Posterior cingulate gyrus (tissue), 11 donors: ENCODE measurements at regions of chr16 and their contacts with region 1.

Region 1: GRCh38 chr16:12573730-12574383 is 229.8 kb downstream of the CPPED1 start:
- DNase-seq: peak in 8 of 10 donors; percentile 34 to 94 (median 62)

Region 2: GRCh38 chr16:12500771-12501170 is 73.1 kb before region 1 on chr16:
- intact Hi-C with region 1: no loop called
- DNase-seq: peak in 3 of 10 donors; percentile 15 to 69 (median 38)

Region 3: DNA sequence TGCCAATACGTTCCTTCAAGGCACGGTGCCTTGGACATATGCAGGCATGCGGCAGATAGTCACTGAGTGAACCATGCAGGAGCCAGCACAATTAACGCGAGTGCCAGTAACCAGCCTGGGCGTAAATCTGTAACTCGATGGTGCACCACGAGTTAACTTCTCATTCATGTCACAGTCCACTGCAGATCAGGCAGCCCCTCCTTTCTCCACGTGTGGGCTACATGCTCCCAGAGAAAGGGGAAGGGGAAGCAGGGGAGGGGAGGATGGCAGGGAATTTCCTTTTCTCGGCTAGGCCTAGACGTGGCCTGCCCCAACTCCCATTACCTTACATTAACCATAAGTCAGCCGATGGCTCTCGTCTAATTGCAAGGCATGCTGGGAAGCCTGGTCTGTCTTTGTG is 58.1 kb before region 1 on chr16:
- intact Hi-C with region 1: loop called (anchors 5 kb)
- DNase-seq: peak in 3 of 10 donors; percentile 27 to 80 (median 47)

Region 4: DNA sequence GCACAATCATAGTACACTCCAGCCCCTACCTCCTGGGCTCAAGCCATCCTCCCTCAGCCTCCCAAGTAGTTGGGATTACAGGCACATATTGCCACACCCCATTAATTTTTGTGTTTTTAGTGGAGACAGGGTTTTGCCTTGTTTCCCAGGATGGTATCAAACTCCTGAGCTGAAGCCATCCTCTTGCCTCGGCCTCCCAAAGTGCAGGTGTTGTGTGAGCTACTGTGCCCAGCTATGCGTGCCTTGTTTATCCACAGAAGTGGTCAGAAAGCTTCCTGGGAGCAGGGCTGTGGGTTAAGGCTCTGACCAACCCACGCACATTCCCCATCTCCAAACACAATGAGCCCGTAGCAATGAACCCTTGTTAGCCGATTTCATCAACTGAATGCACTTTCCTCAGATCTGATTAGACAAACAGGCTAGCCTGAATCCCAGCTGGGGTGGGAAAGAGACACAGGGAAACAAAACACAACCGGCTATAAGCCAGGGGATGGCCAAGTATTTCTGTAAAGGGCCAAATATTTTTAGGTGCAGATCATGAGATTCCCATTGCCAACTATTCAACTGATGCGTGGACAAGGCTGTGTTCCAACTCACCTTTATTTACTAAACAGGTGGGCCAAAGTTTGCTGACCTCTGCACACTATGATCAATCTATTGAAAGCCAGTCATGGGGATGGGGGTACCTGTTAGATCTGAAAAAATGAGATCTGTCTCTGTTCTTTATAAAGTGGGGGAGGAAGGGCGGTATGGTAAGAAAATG is 36.3 kb after region 1 on chr16:
- intact Hi-C with region 1: no loop called
- DNase-seq: peak in 1 of 10 donors; percentile 35